Gastrocnemius medialis (tissue), 4 donors: ENCODE measurements at regions of chrX and their contacts with region 1.

Region 1: DNA sequence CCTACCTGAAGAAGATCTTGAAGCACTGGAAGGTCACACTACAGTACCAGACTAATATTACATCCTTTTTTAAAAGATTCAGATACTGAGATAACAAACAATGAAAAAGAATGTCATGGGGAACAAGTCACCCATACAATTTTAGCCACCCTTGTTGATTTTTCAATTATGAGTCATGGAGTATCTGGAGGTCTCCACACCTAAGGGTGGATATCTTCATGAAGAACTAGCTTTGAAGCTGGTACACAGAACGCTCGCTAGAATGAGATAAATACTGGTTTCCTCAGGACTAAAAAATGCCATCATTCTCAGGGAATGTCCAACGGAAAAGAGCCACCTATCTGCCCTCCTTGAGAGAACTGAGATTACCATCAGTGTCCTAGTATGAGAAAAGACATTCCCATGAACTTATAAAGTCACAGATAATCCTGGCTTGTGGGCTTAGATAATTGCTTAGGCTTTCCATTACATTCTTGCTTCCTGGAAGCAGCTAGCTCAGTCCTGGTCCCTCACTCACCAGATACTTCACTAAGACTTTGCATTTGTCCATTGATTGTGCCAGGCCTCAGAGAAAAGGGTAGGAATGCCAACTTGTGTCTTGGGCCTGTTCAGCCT is 166.7 kb downstream of the OR13H1 start:
- DNase-seq: no peak
- ATAC-seq: no peak
- H3K4me3 ChIP-seq: peak overlapping the region in 2 of 4 donors; percentile 50 to 59
- H3K27ac ChIP-seq: no peak overlapping the region
- H3K4me1 ChIP-seq: no peaks in the 10 kb centered on the region
- H3K27me3 ChIP-seq: no peaks in the 10 kb centered on the region
- CTCF ChIP-seq: no peak
- POLR2A ChIP-seq: no peak

Region 2: GRCh38 chrX:131513159-131513914 is 197.2 kb before region 1 on chrX:
- in situ Hi-C with region 1: no loop called
- intact Hi-C with region 1: no loop called
- DNase-seq: no peak
- ATAC-seq: no peak
- H3K4me3 ChIP-seq: no peak overlapping the region
- H3K27ac ChIP-seq: no peak overlapping the region
- H3K4me1 ChIP-seq: no peaks in the 10 kb centered on the region
- H3K27me3 ChIP-seq: no peaks in the 10 kb centered on the region
- CTCF ChIP-seq: no peak
- POLR2A ChIP-seq: no peak

Region 3: DNA sequence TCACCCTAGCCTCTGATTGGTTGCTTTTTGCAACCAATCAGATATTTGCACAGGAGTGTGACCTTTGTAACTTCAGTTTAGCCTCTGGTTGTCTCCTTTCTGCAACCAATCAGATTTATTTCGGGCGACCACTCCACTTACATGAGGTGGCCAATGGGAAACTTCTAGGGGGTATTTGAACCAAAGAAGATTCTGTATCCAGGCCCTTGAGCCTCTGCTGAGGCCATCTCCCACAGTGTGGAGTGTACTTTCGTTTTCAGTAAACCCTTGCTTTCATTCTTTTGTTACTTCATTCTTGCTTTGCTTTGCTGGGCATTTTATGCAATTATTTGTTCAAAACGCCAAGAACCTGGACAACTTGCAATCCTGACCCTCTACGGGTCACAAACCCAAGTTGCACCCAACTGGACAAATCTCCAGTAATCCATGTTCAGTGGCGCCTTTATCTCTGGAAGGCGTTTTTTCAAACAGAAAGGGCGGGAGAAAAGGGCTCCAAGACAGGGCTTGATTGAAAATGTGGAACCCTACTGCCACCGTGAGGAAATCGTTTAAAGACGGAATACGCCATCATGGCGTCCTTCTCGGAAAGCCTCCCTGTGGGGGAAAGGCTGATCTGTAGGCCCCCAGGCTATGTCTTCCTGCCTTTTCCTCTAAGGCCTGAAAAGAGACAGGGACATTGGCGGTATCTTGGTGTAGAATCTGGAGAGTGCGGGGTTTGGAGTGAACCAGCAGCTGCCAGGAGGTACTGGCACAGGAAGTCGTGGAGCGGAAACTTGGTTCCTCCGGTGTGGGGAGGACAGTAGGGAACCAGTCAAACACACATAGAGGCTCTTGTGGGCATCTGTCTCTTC is 18.0 kb after region 1 on chrX:
- in situ Hi-C with region 1: no loop called
- intact Hi-C with region 1: loop called (anchors 1 kb)
- DNase-seq: no peak
- ATAC-seq: no peak
- H3K4me3 ChIP-seq: peak overlapping the region in 2 of 4 donors; percentile 56
- H3K27ac ChIP-seq: peak overlapping the region in 2 of 4 donors; percentile 71 to 72
- H3K4me1 ChIP-seq: peaks cover 0 to 4% of the 10 kb centered on the region in 2 donors
- H3K27me3 ChIP-seq: no peaks in the 10 kb centered on the region
- CTCF ChIP-seq: peak in 3 of 5 experiments; percentile 55 to 75 (median 63)
- POLR2A ChIP-seq: no peak

Region 4: DNA sequence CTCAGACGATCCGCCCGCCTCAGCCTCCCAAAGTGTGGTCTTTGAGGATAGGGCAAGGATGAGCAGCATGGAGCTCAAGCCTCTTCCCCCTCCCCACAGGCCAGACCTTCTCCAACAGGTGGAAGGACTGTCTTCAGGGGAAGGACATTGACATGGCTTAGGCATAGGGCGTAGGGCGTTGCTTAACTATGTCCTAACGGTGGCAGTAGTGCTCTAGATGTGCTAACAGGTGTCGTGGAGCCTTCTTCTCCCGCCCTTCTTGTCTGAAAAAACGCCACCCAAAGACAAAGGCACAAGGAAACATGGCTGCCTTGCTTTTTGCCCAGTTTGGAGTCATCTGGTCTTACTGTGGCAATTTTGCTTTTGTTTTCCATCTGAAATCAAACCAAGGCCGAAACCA is 53.1 kb after region 1 on chrX:
- in situ Hi-C with region 1: no loop called
- intact Hi-C with region 1: loop called (anchors 1 kb)
- DNase-seq: no peak
- ATAC-seq: no peak
- H3K4me3 ChIP-seq: peak overlapping the region in 2 of 4 donors; percentile 47 to 56
- H3K27ac ChIP-seq: peak overlapping the region in 2 of 4 donors; percentile 48 to 54
- H3K4me1 ChIP-seq: no peaks in the 10 kb centered on the region
- H3K27me3 ChIP-seq: no peaks in the 10 kb centered on the region
- CTCF ChIP-seq: peak in 3 of 5 experiments; percentile 27 to 63 (median 53)
- POLR2A ChIP-seq: no peak